HCT116 (cell line): ENCODE measurements at regions of chr9 and their contacts with region 1.

Region 1: DNA sequence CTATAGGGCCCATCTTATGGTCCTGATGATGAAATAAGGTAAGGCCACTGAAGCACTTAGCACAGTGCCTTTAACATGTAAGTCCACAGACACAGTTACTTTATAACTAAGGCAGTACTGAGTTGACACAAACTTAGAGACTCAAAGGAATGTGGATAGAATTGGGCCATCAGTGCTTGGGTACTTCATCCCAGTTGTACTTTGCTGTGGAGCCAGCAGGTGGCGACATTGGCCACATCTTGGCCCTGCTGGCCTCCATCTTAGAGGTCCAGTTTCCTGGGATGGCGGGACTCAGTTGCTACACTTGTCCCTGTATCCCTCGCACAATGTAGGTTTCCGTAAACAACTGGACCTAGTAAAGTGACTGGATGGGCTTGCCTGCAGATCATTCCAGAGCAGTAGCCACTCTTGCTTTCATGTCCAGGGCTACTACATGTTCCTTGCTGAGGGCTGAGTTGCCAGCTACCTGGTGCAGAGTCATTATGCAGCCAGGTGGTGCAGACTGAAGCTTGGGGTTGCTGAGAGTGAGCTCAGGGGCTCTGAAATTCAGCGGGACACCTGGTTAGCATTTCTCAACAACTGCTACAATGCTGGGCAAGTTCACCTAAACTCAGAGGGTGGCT is 10.6 kb downstream of the MTAP start:
- DNase-seq: no peak
- ATAC-seq: peak; percentile 77
- H3K4me3 ChIP-seq: no peak overlapping the region
- H3K27ac ChIP-seq: peak overlapping the region; percentile 27
- H3K4me1 ChIP-seq: peaks cover 5 to 39% of the 10 kb centered on the region in 2 experiments; a peak in 3 of 4 replicates
- H3K27me3 ChIP-seq: no peaks in the 10 kb centered on the region
- CTCF ChIP-seq: peak; percentile 64 to 93 (median 87); a peak in 5 of 6 replicates
- POLR2A ChIP-seq: no peak
- RAD21 ChIP-seq: peak; percentile 88

Region 2: GRCh38 chr9:22050924-22051323 is 237.9 kb after region 1 on chr9:
- CTCF ChIA-PET with region 1: no interaction called
- POLR2A ChIA-PET with region 1: no interaction called
- RAD21 ChIA-PET with region 1: no interaction called
- intact Hi-C with region 1: no loop called
- DNase-seq: no peak
- ATAC-seq: no peak
- H3K4me3 ChIP-seq: no peak overlapping the region
- H3K27ac ChIP-seq: no peak overlapping the region
- H3K4me1 ChIP-seq: peaks cover 17 to 20% of the 10 kb centered on the region in 2 experiments
- H3K27me3 ChIP-seq: no peaks in the 10 kb centered on the region
- CTCF ChIP-seq: no peak
- POLR2A ChIP-seq: no peak
- RAD21 ChIP-seq: no peak

Region 3: GRCh38 chr9:22119537-22120158 is 306.6 kb after region 1 on chr9:
- CTCF ChIA-PET with region 1: interaction called, 13 read pairs
- POLR2A ChIA-PET with region 1: no interaction called
- RAD21 ChIA-PET with region 1: no interaction called
- intact Hi-C with region 1: loop called (anchors 2 kb)
- DNase-seq: no peak
- ATAC-seq: peak; percentile 87
- H3K4me3 ChIP-seq: no peak overlapping the region
- H3K27ac ChIP-seq: no peak overlapping the region
- H3K4me1 ChIP-seq: peaks cover 2 to 10% of the 10 kb centered on the region in 2 experiments; a peak in 1 of 4 replicates
- H3K27me3 ChIP-seq: no peaks in the 10 kb centered on the region
- CTCF ChIP-seq: peak; percentile 61 to 68 (median 65)
- POLR2A ChIP-seq: no peak
- RAD21 ChIP-seq: peak; percentile 87

Region 4: DNA sequence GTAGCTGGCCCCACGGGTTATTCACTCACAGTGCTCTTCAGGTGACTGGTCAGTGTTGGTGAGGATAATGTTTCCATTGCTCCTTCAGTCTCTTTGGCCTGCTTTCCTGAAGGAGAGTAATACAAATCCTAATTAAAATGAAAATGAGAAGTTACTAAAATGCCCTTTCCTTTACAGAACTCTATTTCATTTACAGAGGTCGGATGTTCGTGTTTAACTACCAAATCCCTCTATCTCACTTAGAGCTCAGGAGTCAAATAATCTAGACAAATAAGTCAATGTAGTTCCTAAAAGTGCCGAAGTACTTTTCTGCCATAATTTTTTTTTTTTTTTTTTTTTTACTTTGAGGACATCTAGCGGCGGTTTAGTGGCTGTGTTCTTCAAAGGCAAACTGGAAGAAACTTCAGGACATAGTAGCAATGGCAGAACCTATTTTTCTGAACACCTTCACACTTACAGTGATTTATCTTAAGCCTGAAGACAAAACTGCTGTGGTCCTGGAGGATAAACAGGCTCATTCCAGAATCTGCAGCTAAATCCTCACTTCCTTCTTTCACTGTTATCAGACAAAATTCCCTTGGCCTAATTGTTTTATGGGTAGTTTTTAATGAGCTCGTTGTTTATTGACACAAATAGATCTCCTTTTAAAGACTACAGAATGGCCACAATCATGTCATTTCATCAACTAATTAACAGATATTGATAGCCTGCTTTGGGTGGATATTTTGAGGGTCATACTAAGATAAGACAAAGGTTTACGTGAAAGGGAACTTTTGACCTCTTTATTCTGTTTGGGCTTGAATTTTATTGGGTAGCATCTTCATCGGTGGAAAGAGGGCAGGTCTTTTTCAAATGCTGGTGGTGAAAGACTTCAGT is 426.0 kb after region 1 on chr9:
- CTCF ChIA-PET with region 1: interaction called, 41 read pairs
- POLR2A ChIA-PET with region 1: interaction called, 6 read pairs
- RAD21 ChIA-PET with region 1: interaction called, 5 to 6 read pairs
- intact Hi-C with region 1: loop called (anchors 1 kb)
- DNase-seq: peak; percentile 37
- ATAC-seq: peak; percentile 43
- H3K4me3 ChIP-seq: peak overlapping the region in 1 of 2 experiments; percentile 12; a peak in 1 of 4 replicates
- H3K27ac ChIP-seq: peak overlapping the region; percentile 28; the same call in 1 of the 2 replicates
- H3K4me1 ChIP-seq: peaks cover 29 to 36% of the 10 kb centered on the region in 2 experiments
- H3K27me3 ChIP-seq: peaks cover 3% of the 10 kb centered on the region; the same call in 1 of the 2 replicates
- CTCF ChIP-seq: peak; percentile 52 to 69 (median 53); a peak in 5 of 6 replicates
- POLR2A ChIP-seq: peak; percentile 28
- RAD21 ChIP-seq: peak; percentile 64

Region 5: GRCh38 chr9:22307013-22307711 is 494.1 kb after region 1 on chr9:
- CTCF ChIA-PET with region 1: interaction called, 5 read pairs
- POLR2A ChIA-PET with region 1: no interaction called
- RAD21 ChIA-PET with region 1: no interaction called
- intact Hi-C with region 1: loop called (anchors 5 kb)
- DNase-seq: peak; percentile 54
- ATAC-seq: peak; percentile 67
- H3K4me3 ChIP-seq: no peak overlapping the region
- H3K27ac ChIP-seq: no peak overlapping the region
- H3K4me1 ChIP-seq: no peaks in the 10 kb centered on the region
- H3K27me3 ChIP-seq: peaks cover 12% of the 10 kb centered on the region; the same call in 1 of the 2 replicates
- CTCF ChIP-seq: peak; percentile 57 to 73 (median 64); a peak in 5 of 6 replicates
- POLR2A ChIP-seq: no peak
- RAD21 ChIP-seq: peak; percentile 82

Region 6: DNA sequence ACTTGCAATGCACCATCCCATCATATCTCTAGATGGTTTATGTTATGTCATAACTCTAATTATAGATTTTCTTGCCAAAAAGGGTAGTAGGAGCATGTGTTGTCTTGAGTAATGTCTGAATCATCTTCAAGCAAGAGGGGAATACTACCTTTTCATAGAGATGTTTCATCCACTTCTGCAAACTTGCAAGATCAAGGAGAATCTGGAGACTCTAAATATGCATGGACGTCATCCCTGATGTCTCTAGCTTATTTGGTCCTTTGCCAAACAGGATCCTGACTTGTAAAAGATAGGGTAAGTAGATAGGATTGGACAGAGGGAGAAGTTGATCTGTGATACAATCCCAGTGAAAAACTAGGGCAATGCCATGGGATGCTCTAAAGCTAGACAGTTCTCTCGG is 880.1 kb after region 1 on chr9:
- CTCF ChIA-PET with region 1: no interaction called
- POLR2A ChIA-PET with region 1: no interaction called
- RAD21 ChIA-PET with region 1: no interaction called
- intact Hi-C with region 1: no loop called
- DNase-seq: no peak
- ATAC-seq: no peak
- H3K4me3 ChIP-seq: no peak overlapping the region
- H3K27ac ChIP-seq: no peak overlapping the region
- H3K4me1 ChIP-seq: no peaks in the 10 kb centered on the region
- H3K27me3 ChIP-seq: no peaks in the 10 kb centered on the region
- CTCF ChIP-seq: no peak
- POLR2A ChIP-seq: no peak
- RAD21 ChIP-seq: no peak